Dorsolateral prefrontal cortex (tissue), 120 donors: ENCODE measurements at regions of chr11 and their contacts with region 1.

Region 1: DNA sequence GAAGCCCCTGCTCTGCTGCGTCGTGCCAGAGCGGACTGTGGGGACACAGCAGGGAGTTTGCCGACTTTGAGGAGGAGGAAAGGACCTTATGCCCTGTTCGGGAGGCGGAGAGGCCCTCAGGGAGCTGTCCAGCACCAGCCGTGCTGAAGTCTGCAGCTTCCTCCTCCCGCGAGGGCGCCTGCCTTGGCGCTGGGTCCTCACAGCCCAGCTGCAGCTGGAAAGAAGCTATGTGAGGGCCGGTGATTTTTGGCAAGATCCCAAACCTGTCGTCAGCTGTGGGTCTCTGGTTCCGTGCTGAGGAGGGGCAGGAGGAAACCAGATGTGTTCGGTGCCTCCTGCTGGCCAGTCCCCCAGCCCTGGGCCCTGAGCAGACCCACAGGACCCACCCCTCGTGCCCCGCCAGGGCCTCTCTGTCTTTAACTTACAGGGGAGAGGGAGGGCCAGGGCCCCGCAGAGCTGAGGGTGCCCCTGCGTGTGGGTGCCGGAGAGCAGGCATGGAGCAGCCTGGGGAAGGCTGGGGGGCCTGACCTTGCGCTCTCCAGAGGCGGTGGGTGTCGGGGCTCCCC is 12.0 kb downstream of the BRSK2 start:
- DNase-seq: peak; percentile 19 to 84 (median 74)
- H3K4me3 ChIP-seq: peak overlapping the region in 45 of 59 donors; percentile 1 to 47 (median 25)
- H3K27ac ChIP-seq: peak overlapping the region in 48 of 59 donors; percentile 6 to 99 (median 72)
- H3K27me3 ChIP-seq: no peaks in the 10 kb centered on the region
- CTCF ChIP-seq: peak in 14 of 56 donors; percentile 7 to 30 (median 15)

Region 2: DNA sequence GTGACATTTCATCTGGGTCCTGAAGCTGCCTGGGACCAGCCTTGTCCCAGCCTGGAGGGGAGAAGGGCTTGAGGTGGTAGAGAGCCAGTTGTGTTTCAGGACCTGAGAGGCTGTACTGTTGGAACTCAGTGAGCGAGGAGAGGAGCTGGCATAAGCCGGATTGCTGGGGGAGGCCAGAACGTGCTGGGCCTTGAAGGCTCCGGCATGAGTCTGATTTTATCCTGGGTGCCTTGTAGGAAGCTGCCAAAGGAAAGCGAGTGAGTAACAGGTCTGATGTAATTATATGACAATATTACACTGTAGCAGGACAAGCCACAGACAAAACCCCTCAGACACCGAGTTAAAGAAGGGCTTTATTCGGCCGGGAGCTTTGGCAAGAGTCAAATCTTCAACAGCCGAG is 458.9 kb before region 1 on chr11:
- intact Hi-C with region 1: no loop called
- DNase-seq: peak in 3 of 10 donors; percentile 58 to 70 (median 64)
- H3K4me3 ChIP-seq: peak overlapping the region in 2 of 59 donors; percentile 12 to 13
- H3K27ac ChIP-seq: peak overlapping the region in 22 of 59 donors; percentile 1 to 74 (median 42)
- H3K27me3 ChIP-seq: no peaks in the 10 kb centered on the region
- CTCF ChIP-seq: no peak

Region 3: GRCh38 chr11:1335811-1336761 is 65.7 kb before region 1 on chr11:
- intact Hi-C with region 1: no loop called
- DNase-seq: peak in 6 of 10 donors; percentile 56 to 79 (median 64)
- H3K4me3 ChIP-seq: peak overlapping the region; percentile 30 to 73 (median 57)
- H3K27ac ChIP-seq: peak overlapping the region in 48 of 59 donors; percentile 22 to 90 (median 75)
- H3K27me3 ChIP-seq: no peaks in the 10 kb centered on the region
- CTCF ChIP-seq: no peak

Region 4: DNA sequence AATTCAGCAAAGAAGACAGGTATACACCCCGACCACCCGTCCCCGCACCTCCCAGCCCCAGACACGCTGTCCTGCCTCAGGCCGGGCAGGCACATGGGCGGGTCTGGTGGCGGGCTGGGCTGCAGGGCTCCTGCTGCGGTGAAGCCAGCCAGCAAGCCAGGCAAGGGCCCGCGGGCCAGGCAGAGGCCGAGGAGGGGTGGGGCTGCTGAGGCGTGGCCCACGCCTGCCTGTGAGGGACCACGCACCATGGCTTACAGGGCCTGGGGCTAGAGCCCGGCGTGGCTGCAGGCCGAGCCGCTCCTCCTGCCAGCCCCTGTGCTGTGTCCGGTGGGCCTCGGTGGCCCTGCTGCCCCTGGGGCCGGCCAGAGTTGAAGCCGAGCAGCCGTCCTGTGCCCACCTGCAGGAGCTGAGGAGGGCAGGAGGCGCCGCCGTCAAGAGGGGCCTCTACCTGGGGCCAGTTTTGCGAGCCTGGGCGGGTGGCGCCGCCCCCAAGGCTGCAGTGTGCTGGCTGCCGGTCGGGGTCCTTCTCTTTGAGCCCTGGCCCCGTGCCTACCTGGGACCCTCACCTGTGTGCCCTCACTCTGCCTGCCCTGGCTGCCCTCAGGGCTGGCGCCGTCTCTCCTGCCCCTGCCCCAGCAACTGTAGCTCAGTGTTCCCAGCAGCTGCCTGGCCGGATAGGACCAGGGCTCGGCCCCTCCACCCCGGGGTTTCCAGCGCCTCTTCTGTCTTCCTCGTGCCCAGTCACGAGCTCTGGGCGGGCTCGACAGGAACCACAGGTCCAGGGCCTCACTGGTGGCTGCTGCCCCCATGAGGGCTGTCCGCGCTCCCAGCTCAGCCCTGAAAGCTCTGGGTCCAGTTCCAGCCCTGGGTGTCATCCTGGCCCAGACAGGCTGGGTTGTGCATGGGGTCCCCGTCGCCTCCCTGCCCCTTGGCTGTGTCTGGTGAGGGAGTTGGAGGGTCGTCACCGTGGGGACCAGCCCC is 46.4 kb after region 1 on chr11:
- intact Hi-C with region 1: loop called in 1 of 2 experiments (anchors 5 kb)
- DNase-seq: peak in 9 of 10 donors; percentile 55 to 76 (median 71)
- H3K4me3 ChIP-seq: no peak overlapping the region
- H3K27ac ChIP-seq: peak overlapping the region in 57 of 59 donors; percentile 11 to 84 (median 70)
- H3K27me3 ChIP-seq: no peaks in the 10 kb centered on the region
- CTCF ChIP-seq: peak in 51 of 56 donors; percentile 26 to 69 (median 50)

Region 5: DNA sequence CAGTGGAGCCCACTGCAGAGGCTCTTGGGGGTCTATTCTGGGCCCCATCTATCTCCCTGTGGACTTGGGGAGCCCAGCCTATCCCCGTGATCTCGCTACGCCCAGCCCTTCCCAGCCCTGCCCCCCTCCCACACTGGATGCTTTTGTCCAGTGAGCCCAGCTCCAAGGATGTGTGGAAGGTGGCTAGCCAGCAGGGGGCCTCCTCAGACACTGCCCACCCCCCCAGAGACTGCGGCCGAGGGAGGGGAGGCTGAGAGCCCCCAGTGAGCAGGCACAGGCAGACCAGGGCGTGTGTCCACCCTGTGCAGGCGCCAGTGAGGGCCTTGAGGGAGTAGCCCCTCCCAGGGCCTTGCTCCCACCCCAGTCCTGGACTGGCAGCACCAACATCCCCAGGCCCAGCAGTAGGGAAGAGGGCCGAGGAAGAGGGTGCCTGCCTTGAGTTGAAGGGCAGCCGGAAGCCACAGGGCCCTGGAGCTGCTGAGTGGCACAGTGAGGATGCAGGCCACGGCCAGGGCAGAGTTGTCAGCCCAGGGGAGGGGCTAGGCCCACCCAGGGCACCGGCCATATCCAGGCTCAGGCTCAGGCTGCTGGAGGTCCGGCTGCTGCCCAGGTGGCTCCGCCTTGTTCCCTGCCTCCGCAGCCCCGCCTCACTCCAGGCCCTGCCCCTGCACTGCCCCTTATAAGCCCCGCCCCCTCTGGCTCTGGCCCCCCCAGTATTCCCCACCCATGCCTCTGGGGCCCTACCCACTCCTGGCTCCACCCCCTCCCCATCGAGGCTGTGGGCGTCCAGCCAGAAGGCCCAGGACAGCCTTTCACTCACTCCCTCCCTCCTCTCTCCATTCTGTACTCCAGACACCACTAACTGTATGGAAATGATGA is 56.8 kb after region 1 on chr11:
- intact Hi-C with region 1: loop called in 1 of 2 experiments (anchors 5 kb)
- DNase-seq: peak in 4 of 10 donors; percentile 35 to 58 (median 52)
- H3K4me3 ChIP-seq: no peak overlapping the region
- H3K27ac ChIP-seq: peak overlapping the region in 56 of 59 donors; percentile 49 to 93 (median 78)
- H3K27me3 ChIP-seq: no peaks in the 10 kb centered on the region
- CTCF ChIP-seq: peak in 43 of 56 donors; percentile 19 to 50 (median 32)

Region 6: GRCh38 chr11:1546077-1546535 is 144.4 kb after region 1 on chr11:
- intact Hi-C with region 1: no loop called
- DNase-seq: no peak
- H3K4me3 ChIP-seq: peak overlapping the region in 24 of 59 donors; percentile 49 to 74 (median 64)
- H3K27ac ChIP-seq: peak overlapping the region in 4 of 59 donors; percentile 3 to 90 (median 57)
- H3K27me3 ChIP-seq: peaks cover 0 to 10% (median 0%) of the 10 kb centered on the region in 45 donors
- CTCF ChIP-seq: no peak